PC-3 (cell line): ENCODE measurements at regions of chr1 and their contacts with region 1.

Region 1: GRCh38 chr1:110053557-110054428 is 16.7 kb downstream of the ALX3 start:
- DNase-seq: peak; percentile 62
- ATAC-seq: peak; percentile 78
- H3K4me3 ChIP-seq: no peak overlapping the region
- H3K27ac ChIP-seq: no peak overlapping the region
- H3K4me1 ChIP-seq: no peaks in the 10 kb centered on the region
- H3K27me3 ChIP-seq: no peaks in the 10 kb centered on the region
- CTCF ChIP-seq: peak; percentile 94

Region 2: DNA sequence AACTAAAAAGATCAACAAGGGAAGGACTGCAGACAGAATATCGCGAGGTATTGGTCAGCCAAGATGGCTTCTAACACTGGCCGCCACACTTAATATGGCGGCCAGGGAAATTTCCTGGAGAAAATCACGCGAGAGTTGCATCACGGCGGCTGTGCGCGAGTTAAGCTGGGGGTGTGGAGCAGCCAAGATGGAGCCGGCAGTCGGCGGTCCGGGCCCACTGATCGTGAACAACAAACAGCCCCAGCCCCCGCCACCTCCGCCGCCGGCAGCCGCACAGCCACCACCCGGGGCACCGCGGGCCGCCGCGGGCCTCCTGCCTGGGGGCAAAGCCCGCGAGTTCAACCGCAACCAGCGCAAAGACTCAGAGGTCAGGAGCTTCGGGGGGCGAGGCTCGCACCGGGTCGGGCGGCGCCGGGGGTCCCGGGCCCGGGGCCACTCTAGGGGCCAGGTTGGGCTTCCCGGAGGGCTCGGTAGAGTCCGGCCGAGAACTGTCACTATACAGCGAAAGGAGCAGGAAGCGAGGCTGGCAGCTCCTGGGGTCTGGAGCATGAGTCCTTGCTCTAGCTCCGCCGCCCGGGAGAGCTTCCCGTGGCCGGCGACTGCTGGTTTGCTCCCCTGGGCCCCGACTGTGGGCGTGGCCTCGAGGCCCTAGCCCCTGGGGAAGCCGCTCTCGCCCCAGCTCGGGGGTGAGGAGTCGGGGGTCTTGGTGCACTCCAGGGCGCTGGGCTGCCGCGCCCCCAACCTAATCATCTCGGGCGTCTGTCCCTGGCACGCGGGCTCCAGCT is 19.1 kb before region 1 on chr1 and contains the start of gene STRIP1:
- CTCF ChIA-PET with region 1: no interaction called
- POLR2A ChIA-PET with region 1: no interaction called
- intact Hi-C with region 1: loop called (anchors 1 kb)
- DNase-seq: peak; percentile 96
- ATAC-seq: peak; percentile 90
- H3K4me3 ChIP-seq: peak within 1 kb of the TSS; percentile 92
- H3K27ac ChIP-seq: peak within 1 kb of the TSS; percentile 33
- H3K4me1 ChIP-seq: peaks cover 21% of the 10 kb centered on the region
- H3K27me3 ChIP-seq: no peaks in the 10 kb centered on the region
- CTCF ChIP-seq: no peak
- total RNA-seq, gene STRIP1: 41.4 and 44.3 TPM in 2 replicates

Region 3: DNA sequence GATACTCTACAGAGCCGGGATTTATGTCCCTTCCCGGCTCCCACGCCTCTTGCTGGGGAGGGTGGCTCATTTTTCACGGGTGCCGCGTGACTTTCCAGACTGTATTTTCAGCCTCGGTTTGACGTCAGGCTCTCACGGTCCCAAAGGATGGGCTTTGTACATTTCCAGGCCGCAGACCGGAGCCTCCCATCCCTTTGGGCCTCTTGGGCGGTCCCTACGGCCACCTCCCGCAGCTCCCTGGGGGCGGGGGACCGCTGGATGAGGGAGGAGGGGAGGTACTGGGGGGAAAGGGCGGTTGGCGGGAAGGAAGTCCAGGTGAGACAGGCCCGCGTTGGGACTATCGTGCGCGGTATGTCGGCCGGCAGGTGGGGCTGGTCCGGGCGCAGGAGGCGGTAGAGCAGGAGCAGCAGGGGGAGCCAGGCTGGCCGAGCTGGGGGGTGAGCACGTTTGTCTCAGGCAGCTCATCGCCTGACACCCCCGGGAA is 76.4 kb after region 1 on chr1:
- CTCF ChIA-PET with region 1: no interaction called
- POLR2A ChIA-PET with region 1: no interaction called
- intact Hi-C with region 1: no loop called
- DNase-seq: no peak
- ATAC-seq: no peak
- H3K4me3 ChIP-seq: no peak overlapping the region
- H3K27ac ChIP-seq: no peak overlapping the region
- H3K4me1 ChIP-seq: no peaks in the 10 kb centered on the region
- H3K27me3 ChIP-seq: peaks cover 20% of the 10 kb centered on the region; the same call in 1 of the 2 replicates
- CTCF ChIP-seq: no peak